ENCODE measurements at regions of chr16 and their contacts with region 1.

Region 1: GRCh38 chr16:74372953-74373846 is 2.9 kb upstream of the NPIPB15 start:
- DNase-seq: no peak
- H3K4me3 Mint-ChIP-seq: no peak overlapping the region
- H3K27ac Mint-ChIP-seq: no peak overlapping the region
- H3K4me1 Mint-ChIP-seq: no peaks in the 10 kb centered on the region
- H3K27me3 Mint-ChIP-seq: no peaks in the 10 kb centered on the region

Region 2: DNA sequence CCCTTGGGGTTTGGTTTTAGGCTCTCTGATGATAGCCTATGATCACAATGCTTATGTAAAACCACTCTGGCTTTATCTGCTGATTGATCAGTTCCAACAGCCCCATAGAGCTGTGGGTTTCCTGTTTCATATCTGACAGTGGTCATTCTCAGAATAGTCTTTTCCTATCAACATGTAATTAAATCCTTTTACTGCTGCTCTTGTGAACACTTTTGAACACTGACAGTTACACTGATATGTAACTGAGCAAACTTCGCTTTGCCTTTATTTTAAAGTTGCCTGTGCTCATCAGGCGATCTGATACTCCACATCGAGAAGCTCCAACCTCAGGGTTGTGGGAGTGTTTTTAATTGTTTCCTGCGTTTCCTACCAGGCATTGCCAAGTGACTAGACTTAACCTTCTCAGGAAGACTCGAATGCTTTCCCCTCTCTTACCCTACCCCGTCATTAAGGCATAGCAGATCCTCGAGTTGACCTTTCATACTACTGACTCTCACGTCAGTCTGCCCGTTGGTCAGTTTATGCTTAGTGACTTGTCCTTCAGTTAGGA is 65.4 kb after region 1 on chr16:
- CTCF ChIA-PET with region 1: no interaction called
- POLR2A ChIA-PET with region 1: no interaction called
- intact Hi-C with region 1: loop called (anchors 10 kb)
- DNase-seq: no peak
- H3K4me3 Mint-ChIP-seq: no peak overlapping the region
- H3K27ac Mint-ChIP-seq: peak overlapping the region; percentile 65
- H3K4me1 Mint-ChIP-seq: peaks cover 16% of the 10 kb centered on the region
- H3K27me3 Mint-ChIP-seq: no peaks in the 10 kb centered on the region

Region 3: GRCh38 chr16:74466872-74467271 is 93.7 kb after region 1 on chr16:
- CTCF ChIA-PET with region 1: no interaction called
- POLR2A ChIA-PET with region 1: no interaction called
- intact Hi-C with region 1: no loop called
- DNase-seq: no peak
- H3K4me3 Mint-ChIP-seq: no peak overlapping the region
- H3K27ac Mint-ChIP-seq: peak overlapping the region; percentile 50
- H3K4me1 Mint-ChIP-seq: peaks cover 32% of the 10 kb centered on the region
- H3K27me3 Mint-ChIP-seq: no peaks in the 10 kb centered on the region

Measured in activated CD4-positive, alpha-beta memory T cell treated with anti-CD3 and anti-CD28 coated beads for 36 hours (primary cell).